Activated T-helper 1 cell treated with anti-CD3 and anti-CD28 coated beads, Interleukin-12 subunit alpha, Interleukin-12 subunit beta, Interleukin-2, Interleukin-4 antibody, amounts not matched to agents 30 ng/mL and 10 ng/mL and 1 ng/mL, durations not matched to agents 14 hours and 24 hours and 36 hours (primary cell): ENCODE measurements at regions of chr7 and their contacts with region 1.

Region 1: GRCh38 chr7:7257899-7258692 is 75.8 kb downstream of the C1GALT1 start:
- DNase-seq: no peak
- H3K4me3 Mint-ChIP-seq: peak overlapping the region; percentile 55
- H3K27ac Mint-ChIP-seq: peak overlapping the region; percentile 82
- H3K4me1 Mint-ChIP-seq: peaks cover 49% of the 10 kb centered on the region
- H3K27me3 Mint-ChIP-seq: no peaks in the 10 kb centered on the region

Region 2: DNA sequence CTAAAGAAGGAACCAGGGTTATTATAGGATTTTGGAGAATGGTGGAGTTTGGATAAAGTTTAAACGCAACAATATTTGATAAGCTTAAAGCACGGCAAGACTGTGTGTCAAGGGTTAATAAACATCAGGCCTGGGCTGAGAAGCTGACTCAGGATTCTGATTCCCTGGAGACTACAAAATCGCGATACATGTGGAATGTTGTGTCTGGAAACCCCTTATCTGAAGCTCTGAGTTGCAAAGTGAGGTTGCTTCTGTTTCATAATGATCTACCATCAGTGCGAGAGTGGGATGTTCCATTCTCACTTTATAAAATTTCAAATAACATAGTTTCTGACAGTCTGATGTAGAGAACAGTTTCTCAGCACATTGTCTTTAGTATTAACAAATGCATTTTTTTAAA is 68.0 kb before region 1 on chr7:
- intact Hi-C with region 1: loop called (anchors 2 kb)
- DNase-seq: no peak
- H3K4me3 Mint-ChIP-seq: no peak overlapping the region
- H3K27ac Mint-ChIP-seq: no peak overlapping the region
- H3K4me1 Mint-ChIP-seq: peaks cover 35% of the 10 kb centered on the region
- H3K27me3 Mint-ChIP-seq: no peaks in the 10 kb centered on the region

Region 3: GRCh38 chr7:7203813-7204575 is 54.1 kb before region 1 on chr7:
- intact Hi-C with region 1: loop called (anchors 2 kb)
- DNase-seq: no peak
- H3K4me3 Mint-ChIP-seq: peak overlapping the region; percentile 61
- H3K27ac Mint-ChIP-seq: peak overlapping the region; percentile 59
- H3K4me1 Mint-ChIP-seq: peaks cover 72% of the 10 kb centered on the region
- H3K27me3 Mint-ChIP-seq: no peaks in the 10 kb centered on the region

Region 4: GRCh38 chr7:7247658-7248057 is 10.4 kb before region 1 on chr7:
- intact Hi-C with region 1: loop called (anchors 1 kb)
- DNase-seq: no peak
- H3K4me3 Mint-ChIP-seq: no peak overlapping the region
- H3K27ac Mint-ChIP-seq: no peak overlapping the region
- H3K4me1 Mint-ChIP-seq: peaks cover 25% of the 10 kb centered on the region
- H3K27me3 Mint-ChIP-seq: no peaks in the 10 kb centered on the region